ENCODE measurements at regions of chr11 and their contacts with region 1.

Region 1: GRCh38 chr11:67178878-67179277 is 59.8 kb downstream of the KDM2A start:
- DNase-seq: no peak
- ATAC-seq: no peak
- H3K4me3 ChIP-seq: no peak overlapping the region
- H3K27ac ChIP-seq: no peak overlapping the region
- H3K4me1 ChIP-seq: no peaks in the 10 kb centered on the region
- H3K27me3 ChIP-seq: no peaks in the 10 kb centered on the region
- CTCF ChIP-seq: no peak
- POLR2A ChIP-seq: no peak

Region 2: GRCh38 chr11:67071420-67072284 is 107.2 kb before region 1 on chr11:
- intact Hi-C with region 1: no loop called
- DNase-seq: peak; percentile 81 to 89 (median 83)
- ATAC-seq: peak; percentile 86 to 93 (median 91)
- H3K4me3 ChIP-seq: peak overlapping the region in 2 of 3 donors; percentile 15 to 58
- H3K27ac ChIP-seq: peak overlapping the region in 1 of 3 donors; percentile 28
- H3K4me1 ChIP-seq: peaks cover 0 to 11% (median 3%) of the 10 kb centered on the region in 4 donors
- H3K27me3 ChIP-seq: no peaks in the 10 kb centered on the region
- CTCF ChIP-seq: peak; percentile 88 to 98 (median 95)
- POLR2A ChIP-seq: no peak

Region 3: GRCh38 chr11:67119585-67120391 is 59.1 kb before region 1 on chr11:
- intact Hi-C with region 1: loop called in 1 of 2 experiments (anchors 10 kb)
- DNase-seq: peak; percentile 42 to 63 (median 56)
- ATAC-seq: peak in 2 of 4 donors; percentile 1 to 3
- H3K4me3 ChIP-seq: peak overlapping the region; percentile 75 to 86 (median 85)
- H3K27ac ChIP-seq: peak overlapping the region; percentile 92 to 99 (median 95)
- H3K4me1 ChIP-seq: peaks cover 0 to 39% (median 4%) of the 10 kb centered on the region in 4 donors
- H3K27me3 ChIP-seq: no peaks in the 10 kb centered on the region
- CTCF ChIP-seq: peak in 1 of 4 donors; percentile 9
- POLR2A ChIP-seq: no peak

Measured in right lobe of liver (tissue), 6 donors.